CD8-positive, alpha-beta T cell (primary cell): ENCODE measurements at regions of chr5 and their contacts with region 1.

Region 1: DNA sequence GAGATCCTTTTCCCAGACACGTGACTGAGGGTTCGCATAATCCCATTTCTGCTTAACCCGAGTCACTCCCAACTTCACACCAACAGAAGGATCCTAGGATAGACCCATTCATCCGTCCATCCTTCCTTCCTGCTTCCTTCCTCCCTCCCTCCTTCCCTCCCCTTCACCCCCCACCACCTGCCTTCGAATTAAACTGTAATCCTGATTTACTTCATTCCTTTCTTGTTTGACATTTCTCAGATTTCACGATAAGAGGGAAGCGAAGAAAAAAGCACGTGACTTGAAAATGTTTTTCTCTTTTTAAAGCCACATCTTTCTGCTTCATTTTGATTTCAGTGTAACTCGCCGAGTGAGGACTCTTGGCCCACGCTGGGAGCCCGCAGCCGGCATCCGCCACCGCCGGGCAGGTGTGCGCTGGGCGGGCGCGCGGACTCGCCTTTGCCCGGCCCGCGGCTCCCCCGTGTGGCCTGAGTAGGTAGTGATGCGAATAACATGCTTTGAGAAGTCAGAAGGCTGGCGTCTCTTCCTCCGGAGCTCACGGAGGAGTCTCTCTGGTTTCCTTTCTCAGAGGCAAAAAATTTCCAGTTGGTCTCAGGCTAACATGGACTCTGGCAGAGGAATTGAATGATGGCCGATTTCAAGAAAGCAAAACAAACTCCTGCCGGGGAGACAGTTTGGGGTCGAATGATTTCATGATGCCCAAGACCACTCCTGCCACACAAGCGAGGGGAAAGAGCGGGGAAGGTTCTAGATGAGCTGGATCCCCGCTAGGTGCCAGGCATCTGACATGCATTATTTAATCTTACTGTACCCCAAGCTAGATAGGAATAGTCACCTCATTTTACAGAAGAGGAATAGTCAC is 117.7 kb downstream of the SLC12A2 start:
- DNase-seq: peak; percentile 65 to 91 (median 80)
- ATAC-seq: peak; percentile 77
- H3K4me3 ChIP-seq: no peak overlapping the region
- H3K4me3 Mint-ChIP-seq: peak overlapping the region; percentile 61
- H3K27ac ChIP-seq: no peak overlapping the region
- H3K27ac Mint-ChIP-seq: no peak overlapping the region
- H3K4me1 ChIP-seq: peaks cover 22% of the 10 kb centered on the region
- H3K4me1 Mint-ChIP-seq: peaks cover 35% of the 10 kb centered on the region
- H3K27me3 ChIP-seq: peaks cover 0 to 2% of the 10 kb centered on the region in 2 experiments
- H3K27me3 Mint-ChIP-seq: peaks cover 9% of the 10 kb centered on the region
- CTCF ChIP-seq: peak; percentile 96

Region 2: DNA sequence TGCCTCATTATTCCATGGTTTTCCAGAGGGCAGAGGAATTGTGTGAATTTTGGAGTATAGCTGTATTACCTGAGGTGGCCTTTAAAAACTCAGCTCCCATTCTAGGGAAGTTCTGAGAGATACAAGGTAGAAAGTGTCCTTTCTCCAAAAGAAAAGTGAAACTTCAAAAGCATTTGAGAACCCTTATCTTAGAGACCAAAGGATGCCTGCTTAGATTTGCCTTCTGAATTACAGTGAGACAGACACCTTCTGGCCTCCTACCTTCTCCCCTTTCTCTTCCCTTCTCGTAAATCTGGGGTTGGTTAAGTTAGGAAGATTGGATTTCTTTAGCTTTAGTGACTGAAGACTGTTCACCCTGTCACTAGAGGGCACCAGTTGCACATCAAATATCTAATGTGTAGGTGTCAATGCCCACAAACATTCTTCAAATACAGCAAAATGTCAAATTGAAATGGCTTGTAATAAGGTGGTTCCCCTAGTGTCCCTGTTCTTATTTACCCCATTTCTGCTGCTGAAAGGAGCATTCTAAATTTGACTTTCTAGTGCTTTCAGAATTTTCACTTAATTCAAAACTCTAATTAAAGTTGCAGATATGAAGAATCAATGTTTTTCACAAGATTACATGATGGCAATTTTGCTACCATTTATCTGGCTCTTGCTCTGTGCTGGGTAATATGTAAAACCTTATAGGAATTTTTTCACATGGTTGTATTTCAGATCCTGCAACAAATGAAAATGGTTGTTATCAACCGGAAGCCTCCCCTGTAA is 637.1 kb before region 1 on chr5:
- CTCF ChIA-PET with region 1: interaction called, 71 read pairs
- POLR2A ChIA-PET with region 1: no interaction called
- intact Hi-C with region 1: loop called (anchors 1 kb)
- DNase-seq: peak in 7 of 9 experiments; percentile 12 to 77 (median 51)
- ATAC-seq: peak; percentile 72
- H3K4me3 ChIP-seq: no peak overlapping the region
- H3K4me3 Mint-ChIP-seq: no peak overlapping the region
- H3K27ac ChIP-seq: no peak overlapping the region
- H3K27ac Mint-ChIP-seq: no peak overlapping the region
- H3K4me1 ChIP-seq: no peaks in the 10 kb centered on the region
- H3K4me1 Mint-ChIP-seq: peaks cover 6% of the 10 kb centered on the region
- H3K27me3 ChIP-seq: no peaks in the 10 kb centered on the region
- H3K27me3 Mint-ChIP-seq: peaks cover 6% of the 10 kb centered on the region
- CTCF ChIP-seq: peak; percentile 71

Region 3: GRCh38 chr5:127746756-127747155 is 454.5 kb before region 1 on chr5:
- CTCF ChIA-PET with region 1: no interaction called
- POLR2A ChIA-PET with region 1: no interaction called
- intact Hi-C with region 1: loop called in 1 of 2 experiments (anchors 1 kb)
- DNase-seq: peak in 2 of 9 experiments; percentile 16 to 28
- ATAC-seq: no peak
- H3K4me3 ChIP-seq: no peak overlapping the region
- H3K4me3 Mint-ChIP-seq: no peak overlapping the region
- H3K27ac ChIP-seq: no peak overlapping the region
- H3K27ac Mint-ChIP-seq: no peak overlapping the region
- H3K4me1 ChIP-seq: no peaks in the 10 kb centered on the region
- H3K4me1 Mint-ChIP-seq: no peaks in the 10 kb centered on the region
- H3K27me3 ChIP-seq: no peaks in the 10 kb centered on the region
- H3K27me3 Mint-ChIP-seq: peaks cover 2% of the 10 kb centered on the region
- CTCF ChIP-seq: no peak

Region 4: GRCh38 chr5:127757576-127757975 is 443.7 kb before region 1 on chr5:
- CTCF ChIA-PET with region 1: interaction called, 3 read pairs
- POLR2A ChIA-PET with region 1: no interaction called
- intact Hi-C with region 1: loop called in 1 of 2 experiments (anchors 5 kb)
- DNase-seq: peak in 2 of 9 experiments; percentile 36 to 37
- ATAC-seq: peak; percentile 51
- H3K4me3 ChIP-seq: no peak overlapping the region
- H3K4me3 Mint-ChIP-seq: no peak overlapping the region
- H3K27ac ChIP-seq: no peak overlapping the region
- H3K27ac Mint-ChIP-seq: no peak overlapping the region
- H3K4me1 ChIP-seq: no peaks in the 10 kb centered on the region
- H3K4me1 Mint-ChIP-seq: no peaks in the 10 kb centered on the region
- H3K27me3 ChIP-seq: no peaks in the 10 kb centered on the region
- H3K27me3 Mint-ChIP-seq: peaks cover 1% of the 10 kb centered on the region
- CTCF ChIP-seq: no peak

Region 5: GRCh38 chr5:127875235-127876021 is 325.9 kb before region 1 on chr5:
- CTCF ChIA-PET with region 1: interaction called, 6 read pairs
- POLR2A ChIA-PET with region 1: no interaction called
- intact Hi-C with region 1: loop called (anchors 1 kb)
- DNase-seq: peak in 4 of 9 experiments; percentile 5 to 41 (median 21)
- ATAC-seq: no peak
- H3K4me3 ChIP-seq: no peak overlapping the region
- H3K4me3 Mint-ChIP-seq: no peak overlapping the region
- H3K27ac ChIP-seq: no peak overlapping the region
- H3K27ac Mint-ChIP-seq: no peak overlapping the region
- H3K4me1 ChIP-seq: no peaks in the 10 kb centered on the region
- H3K4me1 Mint-ChIP-seq: no peaks in the 10 kb centered on the region
- H3K27me3 ChIP-seq: no peaks in the 10 kb centered on the region
- H3K27me3 Mint-ChIP-seq: no peaks in the 10 kb centered on the region
- CTCF ChIP-seq: no peak

Region 6: GRCh38 chr5:128014578-128014977 is 186.7 kb before region 1 on chr5:
- CTCF ChIA-PET with region 1: no interaction called
- POLR2A ChIA-PET with region 1: no interaction called
- intact Hi-C with region 1: no loop called
- DNase-seq: no peak
- ATAC-seq: no peak
- H3K4me3 ChIP-seq: no peak overlapping the region
- H3K4me3 Mint-ChIP-seq: no peak overlapping the region
- H3K27ac ChIP-seq: no peak overlapping the region
- H3K27ac Mint-ChIP-seq: no peak overlapping the region
- H3K4me1 ChIP-seq: no peaks in the 10 kb centered on the region
- H3K4me1 Mint-ChIP-seq: no peaks in the 10 kb centered on the region
- H3K27me3 ChIP-seq: no peaks in the 10 kb centered on the region
- H3K27me3 Mint-ChIP-seq: no peaks in the 10 kb centered on the region
- CTCF ChIP-seq: no peak